Right lobe of liver (tissue), 6 donors: ENCODE measurements at regions of chr22 and their contacts with region 1.

Region 1: DNA sequence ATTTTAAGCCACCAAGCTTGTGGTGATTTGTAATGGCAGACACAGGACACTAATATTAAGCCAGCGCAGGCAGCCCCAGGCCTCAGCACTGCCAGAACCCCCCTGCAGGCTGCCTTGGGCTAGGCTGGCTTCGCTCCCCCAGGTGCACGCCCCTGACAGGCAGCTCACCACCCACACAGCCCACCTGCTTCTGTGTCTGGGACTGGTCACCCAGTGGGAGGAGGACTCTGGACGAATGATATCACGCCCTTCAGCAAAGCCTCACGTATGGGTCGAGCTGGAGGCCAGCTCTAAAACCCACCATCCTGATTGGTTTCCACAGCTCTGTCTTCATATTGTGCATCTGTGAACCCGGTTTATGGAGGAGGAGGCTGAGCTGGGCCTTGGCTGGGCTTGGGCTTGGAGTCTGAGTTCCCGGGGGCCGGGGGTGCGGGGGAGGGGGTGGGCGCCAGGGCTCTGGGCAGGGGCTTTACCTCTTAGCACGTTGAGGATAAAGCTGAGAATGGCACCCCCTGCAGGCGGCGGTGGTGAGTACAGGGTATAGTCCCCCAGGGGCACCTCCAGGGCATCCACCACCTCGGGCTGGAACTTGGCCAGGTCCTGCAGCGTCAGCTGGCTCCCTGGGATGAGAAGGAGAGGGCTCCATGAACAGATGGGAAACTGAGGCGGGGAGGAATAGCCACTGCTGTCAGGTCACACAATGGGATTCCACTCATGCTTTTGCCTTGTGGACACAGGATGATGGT is 13.8 kb downstream of the GGT5 start:
- DNase-seq: peak; percentile 62 to 69 (median 67)
- ATAC-seq: peak; percentile 52 to 74 (median 67)
- H3K4me3 ChIP-seq: no peak overlapping the region
- H3K27ac ChIP-seq: no peak overlapping the region
- H3K4me1 ChIP-seq: no peaks in the 10 kb centered on the region
- H3K27me3 ChIP-seq: no peaks in the 10 kb centered on the region
- CTCF ChIP-seq: peak; percentile 32 to 56 (median 44)
- POLR2A ChIP-seq: no peak

Region 2: GRCh38 chr22:24189249-24190158 is 41.6 kb before region 1 on chr22:
- intact Hi-C with region 1: loop called in 1 of 2 experiments (anchors 10 kb)
- DNase-seq: peak; percentile 74 to 79 (median 74)
- ATAC-seq: peak; percentile 88 to 96 (median 95)
- H3K4me3 ChIP-seq: no peak overlapping the region
- H3K27ac ChIP-seq: no peak overlapping the region
- H3K4me1 ChIP-seq: no peaks in the 10 kb centered on the region
- H3K27me3 ChIP-seq: no peaks in the 10 kb centered on the region
- CTCF ChIP-seq: peak; percentile 82 to 96 (median 84)
- POLR2A ChIP-seq: no peak